Ovary (tissue), 10 donors: ENCODE measurements at regions of chr2 and their contacts with region 1.

Region 1: GRCh38 chr2:106720026-106720425 is 165.9 kb downstream of the ST6GAL2 start:
- DNase-seq: no peak
- H3K4me3 ChIP-seq: no peak overlapping the region
- H3K27ac ChIP-seq: no peak overlapping the region
- H3K4me1 ChIP-seq: no peaks in the 10 kb centered on the region
- H3K27me3 ChIP-seq: no peaks in the 10 kb centered on the region
- CTCF ChIP-seq: no peak
- EP300 ChIP-seq: no peak
- POLR2A ChIP-seq: no peak

Region 2: DNA sequence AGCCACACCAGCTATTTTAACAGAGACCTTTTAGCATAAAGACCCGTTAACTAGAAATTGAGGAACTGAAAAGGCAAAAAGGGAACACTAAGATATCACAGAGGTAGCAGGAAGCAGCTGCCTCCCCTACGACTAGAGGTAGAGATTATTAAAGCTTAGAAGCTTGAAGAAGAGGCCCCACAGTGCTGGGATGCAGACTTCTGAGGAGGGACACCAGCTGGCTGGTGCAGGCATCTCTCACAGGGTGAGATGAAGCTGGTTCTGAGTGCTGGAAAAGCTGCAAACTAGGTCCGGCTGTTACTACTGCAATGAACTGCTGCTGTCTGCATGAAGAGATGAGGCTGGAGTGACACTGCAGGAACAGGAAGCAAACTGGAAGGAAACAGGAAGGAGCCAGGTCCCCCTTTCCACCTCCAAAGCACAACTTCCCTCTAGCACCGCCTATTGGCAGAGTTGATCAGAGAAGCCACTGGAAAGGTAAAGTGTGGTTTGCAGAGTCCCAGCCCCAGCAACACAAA is 1743.4 kb before region 1 on chr2:
- intact Hi-C with region 1: loop called in 1 of 4 experiments (anchors 5 kb)
- DNase-seq: no peak
- H3K4me3 ChIP-seq: no peak overlapping the region
- H3K27ac ChIP-seq: no peak overlapping the region
- H3K4me1 ChIP-seq: no peaks in the 10 kb centered on the region
- H3K27me3 ChIP-seq: no peaks in the 10 kb centered on the region
- CTCF ChIP-seq: no peak
- EP300 ChIP-seq: no peak
- POLR2A ChIP-seq: no peak

Region 3: GRCh38 chr2:106614511-106615291 is 105.3 kb before region 1 on chr2:
- intact Hi-C with region 1: no loop called
- DNase-seq: no peak
- H3K4me3 ChIP-seq: no peak overlapping the region
- H3K27ac ChIP-seq: no peak overlapping the region
- H3K4me1 ChIP-seq: no peaks in the 10 kb centered on the region
- H3K27me3 ChIP-seq: no peaks in the 10 kb centered on the region
- CTCF ChIP-seq: no peak
- EP300 ChIP-seq: no peak
- POLR2A ChIP-seq: no peak